ENCODE measurements at regions of chr9 and their contacts with region 1.

Region 1: DNA sequence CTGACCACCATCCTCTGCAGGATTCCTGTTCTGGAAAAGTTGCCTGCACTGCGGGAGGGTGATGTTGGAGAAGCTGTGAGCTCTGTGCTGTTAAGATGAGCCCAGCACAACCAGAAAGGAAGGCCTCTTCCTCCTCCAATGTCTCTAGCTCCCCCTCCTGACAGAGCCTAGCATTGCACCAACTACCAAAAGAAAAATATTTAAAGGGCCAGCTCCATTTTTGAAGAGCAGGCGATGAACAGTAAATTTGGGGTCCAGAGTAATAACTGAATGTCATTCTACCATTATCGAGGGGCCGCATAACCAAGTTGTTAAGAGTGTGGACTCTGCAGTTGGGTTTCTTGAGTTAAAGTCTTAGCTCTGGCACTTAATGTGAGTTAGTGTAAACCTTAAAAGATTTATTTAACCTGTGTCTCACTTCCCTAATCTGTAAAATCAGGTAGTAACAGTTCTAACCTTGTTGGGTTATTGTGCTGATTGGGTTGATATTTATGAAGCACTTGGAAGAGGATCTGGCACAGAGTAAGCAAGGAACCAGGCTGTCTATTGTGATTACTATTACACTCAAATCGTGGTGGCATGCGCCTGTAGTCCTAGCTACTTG is 3.9 kb downstream of the TEX53 start:
- DNase-seq: peak; percentile 71
- ATAC-seq: peak; percentile 83
- H3K4me3 ChIP-seq: no peak overlapping the region
- H3K27ac ChIP-seq: no peak overlapping the region
- H3K4me1 ChIP-seq: no peaks in the 10 kb centered on the region
- H3K27me3 ChIP-seq: peaks cover 0 to 1% of the 10 kb centered on the region in 2 experiments; a peak in 2 of 5 replicates
- CTCF ChIP-seq: peak; percentile 90
- EP300 ChIP-seq: no peak
- POLR2A ChIP-seq: no peak
- RAD21 ChIP-seq: peak; percentile 79

Region 2: GRCh38 chr9:114405294-114406034 is 248.2 kb before region 1 on chr9:
- CTCF ChIA-PET with region 1: interaction called, 25 read pairs
- POLR2A ChIA-PET with region 1: interaction called, 10 read pairs
- in situ Hi-C with region 1: loop called (anchors 10 kb)
- intact Hi-C with region 1: loop called (anchors 1 kb)
- DNase-seq: peak; percentile 72
- ATAC-seq: peak; percentile 88
- H3K4me3 ChIP-seq: no peak overlapping the region
- H3K27ac ChIP-seq: no peak overlapping the region
- H3K4me1 ChIP-seq: peaks cover 29% of the 10 kb centered on the region
- H3K27me3 ChIP-seq: no peaks in the 10 kb centered on the region
- CTCF ChIP-seq: peak; percentile 95
- EP300 ChIP-seq: no peak
- POLR2A ChIP-seq: no peak
- RAD21 ChIP-seq: peak; percentile 94

Region 3: DNA sequence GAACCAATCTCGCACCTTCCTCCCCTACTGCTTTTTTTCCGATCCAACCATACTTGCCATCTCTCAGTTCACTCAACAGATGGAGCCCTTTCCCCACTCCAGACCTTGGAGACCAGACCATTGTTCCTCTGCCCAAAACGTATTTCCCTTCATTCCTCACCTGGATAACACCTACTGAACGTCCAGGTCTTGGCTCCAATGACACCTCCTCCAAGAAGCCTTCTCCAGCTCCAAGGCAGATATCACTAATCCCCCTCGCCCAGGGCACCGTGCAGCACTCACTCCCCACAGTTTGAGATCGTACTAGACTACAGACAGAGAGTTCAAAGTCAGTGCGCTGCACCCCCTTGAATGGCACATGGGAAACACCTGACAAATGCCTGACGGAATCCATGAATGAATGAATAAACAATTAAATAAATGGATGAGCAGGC is 218.8 kb before region 1 on chr9:
- CTCF ChIA-PET with region 1: interaction called, 11 read pairs
- POLR2A ChIA-PET with region 1: no interaction called
- in situ Hi-C with region 1: loop called (anchors 10 kb)
- intact Hi-C with region 1: loop called (anchors 1 kb)
- DNase-seq: peak; percentile 33
- ATAC-seq: peak; percentile 87
- H3K4me3 ChIP-seq: no peak overlapping the region
- H3K27ac ChIP-seq: no peak overlapping the region
- H3K4me1 ChIP-seq: peaks cover 29% of the 10 kb centered on the region
- H3K27me3 ChIP-seq: no peaks in the 10 kb centered on the region
- CTCF ChIP-seq: peak; percentile 89
- EP300 ChIP-seq: no peak
- POLR2A ChIP-seq: no peak
- RAD21 ChIP-seq: peak; percentile 75

Region 4: DNA sequence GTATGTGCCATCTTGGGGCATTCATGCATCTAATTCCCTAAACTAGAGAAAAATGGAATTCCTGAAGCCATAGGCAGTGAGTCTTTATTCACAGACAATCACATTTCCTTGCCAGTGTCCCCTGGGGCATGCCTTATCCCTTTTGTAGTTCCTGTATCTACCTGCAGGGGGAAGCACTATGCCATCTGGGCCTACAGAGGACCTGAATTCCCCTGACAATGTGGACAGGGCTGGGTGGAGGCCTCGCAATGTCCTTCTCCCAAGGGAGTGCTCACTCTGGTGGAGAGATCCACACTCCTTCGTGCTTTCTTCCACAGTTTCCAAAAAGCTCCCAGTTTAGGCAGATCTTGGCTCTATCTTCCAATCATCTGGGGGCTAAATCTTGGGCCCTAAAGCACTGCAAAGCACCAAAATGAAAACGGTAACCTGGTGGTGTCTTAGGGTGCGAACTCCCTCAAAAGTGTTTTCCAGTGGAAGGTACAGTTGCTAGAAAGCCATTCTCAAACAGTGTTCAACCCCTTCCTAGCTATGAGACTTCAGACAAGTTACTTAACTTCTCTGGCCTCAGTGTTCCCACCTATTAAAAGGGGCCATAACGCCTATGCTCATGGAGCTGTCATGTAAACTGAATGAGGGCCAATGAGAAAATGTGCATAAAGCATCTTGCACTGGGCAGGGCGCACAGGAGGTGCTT is 165.9 kb before region 1 on chr9:
- CTCF ChIA-PET with region 1: interaction called, 37 read pairs
- POLR2A ChIA-PET with region 1: no interaction called
- in situ Hi-C with region 1: loop called (anchors 5 kb)
- intact Hi-C with region 1: loop called (anchors 1 kb)
- DNase-seq: peak; percentile 71
- ATAC-seq: peak; percentile 99
- H3K4me3 ChIP-seq: no peak overlapping the region
- H3K27ac ChIP-seq: no peak overlapping the region
- H3K4me1 ChIP-seq: no peaks in the 10 kb centered on the region
- H3K27me3 ChIP-seq: no peaks in the 10 kb centered on the region
- CTCF ChIP-seq: peak; percentile 94
- EP300 ChIP-seq: no peak
- POLR2A ChIP-seq: no peak
- RAD21 ChIP-seq: peak; percentile 80

Region 5: GRCh38 chr9:114505187-114506081 is 148.2 kb before region 1 on chr9 and contains the start of gene WHRN:
- CTCF ChIA-PET with region 1: no interaction called
- POLR2A ChIA-PET with region 1: no interaction called
- in situ Hi-C with region 1: no loop called
- intact Hi-C with region 1: loop called (anchors 5 kb)
- DNase-seq: peak; percentile 77
- ATAC-seq: peak; percentile 80
- H3K4me3 ChIP-seq: peak within 1 kb of the TSS; percentile 76 to 80 (median 77)
- H3K27ac ChIP-seq: peak within 1 kb of the TSS; percentile 17
- H3K4me1 ChIP-seq: peaks cover 38% of the 10 kb centered on the region
- H3K27me3 ChIP-seq: peaks cover 0 to 23% of the 10 kb centered on the region in 2 experiments; a peak in 3 of 5 replicates
- CTCF ChIP-seq: 0 out of 2 replicates have a peak, but pooled peaks have one; percentile 6
- EP300 ChIP-seq: no peak
- POLR2A ChIP-seq: peak; percentile 77 to 81
- RAD21 ChIP-seq: no peak
- total RNA-seq, gene WHRN: 1.8 and 2.3 TPM in 2 replicates

Region 6: GRCh38 chr9:114538241-114538640 is 115.4 kb before region 1 on chr9:
- CTCF ChIA-PET with region 1: interaction called, 4 read pairs
- POLR2A ChIA-PET with region 1: no interaction called
- in situ Hi-C with region 1: no loop called
- intact Hi-C with region 1: loop called (anchors 1 kb)
- DNase-seq: peak; percentile 37
- ATAC-seq: peak; percentile 96
- H3K4me3 ChIP-seq: no peak overlapping the region
- H3K27ac ChIP-seq: no peak overlapping the region
- H3K4me1 ChIP-seq: no peaks in the 10 kb centered on the region
- H3K27me3 ChIP-seq: peaks cover 0 to 1% of the 10 kb centered on the region in 2 experiments; a peak in 2 of 5 replicates
- CTCF ChIP-seq: peak; percentile 59
- EP300 ChIP-seq: no peak
- POLR2A ChIP-seq: no peak
- RAD21 ChIP-seq: no peak

Measured in HepG2 (cell line).